ENCODE measurements at regions of chr6 and their contacts with region 1.

Region 1: DNA sequence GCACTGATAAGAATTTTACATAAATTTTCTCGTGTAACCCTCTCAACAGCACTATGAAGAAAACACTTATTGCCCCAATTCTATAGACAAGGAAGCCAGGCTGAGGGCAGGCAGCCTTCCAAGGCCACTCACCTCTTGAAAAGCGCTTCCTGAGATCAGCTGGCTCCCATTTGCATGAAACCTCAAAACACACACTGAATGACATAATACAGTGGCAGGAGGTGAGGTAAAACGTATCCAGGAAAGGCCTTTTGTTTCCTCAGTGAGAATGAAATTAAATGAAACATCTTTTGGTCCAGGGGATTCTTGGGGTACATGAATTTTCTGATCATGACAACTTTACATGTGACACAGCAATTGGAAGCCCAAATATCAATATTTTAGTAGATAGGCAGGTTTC is 112.5 kb downstream of the WDR27 start:
- DNase-seq: peak; percentile 45
- H3K4me3 Mint-ChIP-seq: no peak overlapping the region
- H3K27ac Mint-ChIP-seq: peak overlapping the region; percentile 34
- H3K4me1 Mint-ChIP-seq: peaks cover 22% of the 10 kb centered on the region
- H3K27me3 Mint-ChIP-seq: no peaks in the 10 kb centered on the region

Region 2: DNA sequence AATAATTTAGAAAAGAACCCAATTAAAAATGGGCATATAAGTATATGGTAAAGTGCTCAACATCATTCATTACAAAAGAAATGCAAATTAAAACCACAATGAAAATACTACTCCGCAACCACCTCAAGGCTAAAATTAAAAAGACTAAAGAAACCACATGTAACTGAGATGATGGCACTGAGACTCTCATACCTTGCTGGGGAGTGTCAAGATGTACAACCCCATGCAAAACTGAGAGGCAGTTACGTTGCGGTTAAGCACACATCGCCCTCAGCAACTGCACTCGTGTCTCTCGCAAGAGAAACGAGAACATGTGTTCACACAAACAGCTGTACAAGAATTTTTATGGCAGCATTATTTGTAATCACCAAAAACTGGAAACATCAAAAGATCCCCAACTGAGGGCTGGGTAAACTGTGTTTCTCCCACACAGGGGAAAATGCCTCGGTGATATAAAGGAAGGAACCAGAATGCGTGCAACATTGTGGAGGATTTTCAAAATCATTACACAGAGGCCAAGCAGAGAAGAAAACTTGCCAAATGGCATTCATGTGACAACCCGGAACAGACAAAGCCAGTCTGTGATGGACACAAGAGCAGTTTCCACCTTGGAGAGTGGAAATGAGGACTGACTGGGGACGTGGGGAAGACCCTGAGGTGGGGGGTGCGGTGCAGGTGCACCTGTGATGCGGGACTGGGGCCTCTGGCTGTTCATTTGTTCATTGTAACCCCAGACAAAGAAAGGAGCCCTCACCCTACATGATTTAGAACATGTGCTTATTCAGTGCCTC is 32.3 kb before region 1 on chr6:
- CTCF ChIA-PET with region 1: no interaction called
- POLR2A ChIA-PET with region 1: no interaction called
- intact Hi-C with region 1: loop called (anchors 1 kb)
- DNase-seq: peak; percentile 65
- H3K4me3 Mint-ChIP-seq: no peak overlapping the region
- H3K27ac Mint-ChIP-seq: no peak overlapping the region
- H3K4me1 Mint-ChIP-seq: peaks cover 13% of the 10 kb centered on the region
- H3K27me3 Mint-ChIP-seq: peaks cover 4% of the 10 kb centered on the region

Measured in activated CD4-positive, alpha-beta memory T cell treated with anti-CD3 and anti-CD28 coated beads for 36 hours (primary cell).